ENCODE measurements at regions of chr15 and their contacts with region 1.

Region 1: DNA sequence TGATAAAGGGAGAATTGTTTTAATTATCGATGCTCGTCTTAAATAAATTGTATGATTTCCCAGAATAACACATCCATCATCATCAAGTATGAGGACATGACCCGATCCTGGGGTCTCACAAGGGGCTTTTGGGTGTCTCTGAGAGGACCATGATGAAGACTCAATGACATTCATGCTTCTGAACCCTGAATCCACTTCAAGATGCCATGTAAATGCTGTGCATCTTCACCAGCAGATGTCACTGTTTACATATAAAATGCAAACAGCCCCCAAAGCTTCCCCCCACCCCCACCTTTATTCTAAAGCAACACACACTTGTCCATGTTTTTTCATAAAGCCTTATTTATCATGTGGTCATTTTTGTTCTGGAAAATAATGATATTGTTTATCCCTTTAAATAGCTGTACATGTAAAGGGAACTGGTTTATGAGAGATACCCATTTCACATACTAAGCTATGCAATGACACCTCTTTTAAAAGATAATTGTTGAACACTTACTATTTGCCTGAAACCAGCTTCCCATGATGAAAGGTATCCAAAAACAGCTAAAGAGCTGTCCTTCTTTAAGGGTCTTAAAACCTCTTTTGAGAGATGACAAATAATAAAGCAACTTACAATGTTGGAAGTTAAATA is 69.7 kb upstream of the UBE3A start:
- DNase-seq: no peak
- ATAC-seq: no peak
- H3K4me3 Mint-ChIP-seq: no peak overlapping the region
- H3K27ac Mint-ChIP-seq: no peak overlapping the region
- H3K4me1 Mint-ChIP-seq: no peaks in the 10 kb centered on the region
- H3K27me3 Mint-ChIP-seq: peaks cover 3% of the 10 kb centered on the region

Region 2: DNA sequence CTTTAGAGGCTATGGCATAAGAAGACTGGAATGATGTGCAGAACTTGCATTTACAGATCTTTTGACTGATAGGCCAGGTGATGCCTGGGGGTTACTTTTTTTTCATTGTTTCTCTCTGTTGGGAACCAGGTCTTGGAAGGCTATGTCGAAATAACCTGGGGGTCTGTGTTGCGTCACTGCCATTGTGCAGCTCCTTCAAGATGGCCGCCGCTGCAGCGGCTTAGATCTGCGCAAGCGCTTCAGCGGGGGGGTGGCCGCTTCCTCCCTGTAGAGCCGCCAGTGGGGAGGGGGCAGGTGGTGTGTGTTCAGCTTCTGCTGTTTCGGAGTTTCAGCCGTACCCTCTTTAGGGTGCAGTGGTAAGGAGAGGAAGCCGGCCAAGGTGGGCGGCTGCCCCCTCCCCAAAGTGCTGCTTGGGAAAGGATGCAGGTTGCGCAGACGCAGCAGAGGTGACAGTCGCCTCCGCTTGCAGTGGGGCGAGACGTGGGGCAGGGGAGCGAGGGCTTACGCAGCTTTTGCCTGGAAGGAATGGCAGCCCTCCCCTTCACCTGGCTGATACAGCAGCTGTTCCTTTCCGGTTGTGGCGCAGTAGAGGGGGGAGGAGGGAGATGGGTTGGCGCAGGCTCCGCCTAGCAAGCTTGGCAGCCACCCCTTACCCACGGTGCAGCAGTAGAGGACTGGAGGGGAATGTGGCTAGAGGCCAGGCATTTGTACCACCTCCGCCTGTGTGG is 552.2 kb before region 1 on chr15:
- CTCF ChIA-PET with region 1: no interaction called
- POLR2A ChIA-PET with region 1: no interaction called
- intact Hi-C with region 1: no loop called
- DNase-seq: peak; percentile 88
- ATAC-seq: peak; percentile 83
- H3K4me3 Mint-ChIP-seq: peak overlapping the region; percentile 91
- H3K27ac Mint-ChIP-seq: peak overlapping the region; percentile 94
- H3K4me1 Mint-ChIP-seq: peaks cover 11% of the 10 kb centered on the region
- H3K27me3 Mint-ChIP-seq: no peaks in the 10 kb centered on the region

Region 3: DNA sequence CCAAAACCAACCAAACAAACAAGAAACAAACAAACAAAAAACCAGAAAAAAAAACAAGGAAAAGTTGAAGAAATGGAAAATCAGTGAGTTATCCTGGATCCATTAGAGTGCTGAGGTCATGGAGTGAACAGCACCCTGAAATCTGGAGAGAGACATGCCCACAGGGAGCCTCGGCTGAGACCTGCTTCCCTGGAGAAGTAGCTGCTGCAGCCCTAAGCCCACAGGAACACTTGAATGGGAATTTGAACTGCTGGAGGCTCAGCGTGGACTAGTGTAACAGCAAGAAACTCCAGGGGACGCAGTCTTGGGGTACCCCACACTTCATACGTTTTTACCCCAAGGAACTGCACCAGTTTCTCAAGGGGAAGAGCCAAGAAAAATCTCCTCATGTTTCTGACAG is 74.4 kb after region 1 on chr15:
- CTCF ChIA-PET with region 1: no interaction called
- POLR2A ChIA-PET with region 1: interaction called, 17 read pairs
- intact Hi-C with region 1: no loop called
- DNase-seq: no peak
- ATAC-seq: no peak
- H3K4me3 Mint-ChIP-seq: no peak overlapping the region
- H3K27ac Mint-ChIP-seq: no peak overlapping the region
- H3K4me1 Mint-ChIP-seq: no peaks in the 10 kb centered on the region
- H3K27me3 Mint-ChIP-seq: peaks cover 2% of the 10 kb centered on the region

Region 4: GRCh38 chr15:25710184-25710583 is 201.7 kb after region 1 on chr15:
- CTCF ChIA-PET with region 1: interaction called, 5 read pairs
- POLR2A ChIA-PET with region 1: no interaction called
- intact Hi-C with region 1: loop called in 1 of 2 experiments (anchors 1 kb)
- DNase-seq: peak; percentile 75
- ATAC-seq: peak; percentile 90
- H3K4me3 Mint-ChIP-seq: no peak overlapping the region
- H3K27ac Mint-ChIP-seq: no peak overlapping the region
- H3K4me1 Mint-ChIP-seq: no peaks in the 10 kb centered on the region
- H3K27me3 Mint-ChIP-seq: no peaks in the 10 kb centered on the region

Region 5: GRCh38 chr15:25790000-25790660 is 281.6 kb after region 1 on chr15:
- CTCF ChIA-PET with region 1: no interaction called
- POLR2A ChIA-PET with region 1: no interaction called
- intact Hi-C with region 1: no loop called
- DNase-seq: peak; percentile 78
- ATAC-seq: peak; percentile 98
- H3K4me3 Mint-ChIP-seq: no peak overlapping the region
- H3K27ac Mint-ChIP-seq: peak overlapping the region; percentile 65
- H3K4me1 Mint-ChIP-seq: peaks cover 62% of the 10 kb centered on the region
- H3K27me3 Mint-ChIP-seq: no peaks in the 10 kb centered on the region

Region 6: GRCh38 chr15:26260517-26261133 is 752.1 kb after region 1 on chr15:
- CTCF ChIA-PET with region 1: interaction called, 4 read pairs
- POLR2A ChIA-PET with region 1: no interaction called
- intact Hi-C with region 1: loop called (anchors 1 kb)
- DNase-seq: peak; percentile 54
- ATAC-seq: peak; percentile 51
- H3K4me3 Mint-ChIP-seq: no peak overlapping the region
- H3K27ac Mint-ChIP-seq: no peak overlapping the region
- H3K4me1 Mint-ChIP-seq: no peaks in the 10 kb centered on the region
- H3K27me3 Mint-ChIP-seq: peaks cover 2% of the 10 kb centered on the region

Region 7: GRCh38 chr15:26864664-26865191 is 1356.2 kb after region 1 on chr15:
- CTCF ChIA-PET with region 1: interaction called, 4 read pairs
- POLR2A ChIA-PET with region 1: no interaction called
- intact Hi-C with region 1: loop called in 1 of 2 experiments (anchors 10 kb)
- DNase-seq: peak; percentile 39
- ATAC-seq: no peak
- H3K4me3 Mint-ChIP-seq: no peak overlapping the region
- H3K27ac Mint-ChIP-seq: no peak overlapping the region
- H3K4me1 Mint-ChIP-seq: no peaks in the 10 kb centered on the region
- H3K27me3 Mint-ChIP-seq: peaks cover 31% of the 10 kb centered on the region